Activated B cell treated with CpG ODN at 0.5 μM for 24 hours (primary cell): ENCODE measurements at regions of chr3 and their contacts with region 1.

Region 1: DNA sequence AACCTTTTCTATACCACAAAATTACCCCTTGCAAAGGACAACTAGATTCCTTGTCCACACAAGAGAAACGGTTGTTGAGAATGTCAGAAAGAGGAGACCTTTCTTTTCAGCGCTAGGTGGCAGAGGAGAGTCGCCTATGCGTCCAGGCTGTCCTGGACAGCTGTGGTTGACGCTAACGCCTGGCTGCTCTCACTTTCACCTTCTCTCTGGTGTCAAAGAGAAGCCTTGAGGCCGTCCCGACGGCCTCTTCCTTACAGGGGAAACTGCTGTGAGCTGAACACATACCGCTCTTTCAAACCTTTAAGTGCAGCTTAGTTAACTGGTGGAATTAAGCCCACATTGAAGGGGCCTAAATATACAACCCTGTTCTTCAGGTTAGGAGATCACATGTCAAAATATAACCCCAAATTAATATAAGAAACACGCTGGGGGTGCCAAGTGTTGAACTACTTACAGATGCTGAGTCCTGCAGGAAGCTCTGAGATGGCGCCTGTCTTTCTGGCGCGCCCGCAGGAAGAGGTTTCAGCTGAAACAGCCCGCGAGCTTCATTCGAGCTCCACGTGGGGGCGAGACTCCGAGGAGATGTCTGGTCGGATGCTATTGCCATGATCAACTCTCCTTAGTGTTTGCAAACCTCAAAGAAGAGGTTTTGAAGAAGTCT is 26.1 kb upstream of the KBTBD8 start:
- DNase-seq: peak; percentile 40
- ATAC-seq: peak; percentile 96
- H3K4me3 Mint-ChIP-seq: peak overlapping the region; percentile 84
- H3K27ac Mint-ChIP-seq: peak overlapping the region; percentile 88
- H3K4me1 Mint-ChIP-seq: peaks cover 15% of the 10 kb centered on the region
- H3K27me3 Mint-ChIP-seq: no peaks in the 10 kb centered on the region
- CTCF ChIP-seq: peak; percentile 42

Region 2: GRCh38 chr3:66544619-66545429 is 427.2 kb before region 1 on chr3:
- CTCF ChIA-PET with region 1: no interaction called
- POLR2A ChIA-PET with region 1: no interaction called
- intact Hi-C with region 1: no loop called
- DNase-seq: no peak
- ATAC-seq: no peak
- H3K4me3 Mint-ChIP-seq: no peak overlapping the region
- H3K27ac Mint-ChIP-seq: no peak overlapping the region
- H3K4me1 Mint-ChIP-seq: no peaks in the 10 kb centered on the region
- H3K27me3 Mint-ChIP-seq: peaks cover 3% of the 10 kb centered on the region
- CTCF ChIP-seq: no peak

Region 3: GRCh38 chr3:66885326-66886000 is 86.6 kb before region 1 on chr3:
- CTCF ChIA-PET with region 1: no interaction called
- POLR2A ChIA-PET with region 1: no interaction called
- intact Hi-C with region 1: no loop called
- DNase-seq: no peak
- ATAC-seq: no peak
- H3K4me3 Mint-ChIP-seq: no peak overlapping the region
- H3K27ac Mint-ChIP-seq: no peak overlapping the region
- H3K4me1 Mint-ChIP-seq: no peaks in the 10 kb centered on the region
- H3K27me3 Mint-ChIP-seq: no peaks in the 10 kb centered on the region
- CTCF ChIP-seq: no peak

Region 4: DNA sequence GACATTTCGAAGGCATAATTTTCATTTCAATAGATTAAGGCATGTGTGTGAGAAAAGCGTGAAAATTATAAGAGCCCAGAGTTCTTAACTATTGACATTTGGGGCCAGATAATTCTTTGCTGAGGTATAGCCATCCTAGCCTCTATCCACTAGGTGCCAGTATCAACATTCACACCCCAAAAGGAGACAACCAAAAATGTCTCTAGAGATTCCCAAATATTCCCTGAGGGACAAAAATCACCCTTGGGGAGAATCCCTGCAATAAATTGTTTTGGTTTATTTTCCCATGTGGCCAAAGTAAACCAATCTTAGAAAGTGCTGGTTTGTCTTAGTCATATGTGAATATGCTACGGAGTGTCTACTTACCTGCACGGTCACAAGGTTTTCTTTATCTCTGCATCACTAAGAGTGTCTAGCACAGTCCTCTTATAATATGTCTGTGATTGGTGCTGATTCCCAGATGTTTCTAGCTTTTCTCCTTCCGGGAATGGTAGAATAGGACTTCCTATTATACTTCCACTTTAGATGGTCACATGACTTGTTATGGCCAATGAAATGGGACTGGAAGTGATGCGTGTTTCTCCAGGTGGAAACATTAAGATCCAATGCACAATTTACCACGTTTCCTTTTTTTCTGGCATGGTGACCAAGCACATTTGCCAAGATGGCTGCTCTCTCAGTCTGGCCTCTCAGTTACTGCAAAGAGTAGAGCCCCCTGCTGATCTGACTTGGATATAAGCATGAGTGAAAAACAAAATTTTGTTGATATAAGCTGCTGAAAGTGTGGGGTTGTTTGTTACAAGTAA is 18.0 kb after region 1 on chr3:
- CTCF ChIA-PET with region 1: interaction called, 77 read pairs
- POLR2A ChIA-PET with region 1: interaction called, 4 read pairs
- intact Hi-C with region 1: loop called (anchors 1 kb)
- DNase-seq: no peak
- ATAC-seq: peak; percentile 83
- H3K4me3 Mint-ChIP-seq: peak overlapping the region; percentile 83
- H3K27ac Mint-ChIP-seq: peak overlapping the region; percentile 87
- H3K4me1 Mint-ChIP-seq: peaks cover 5% of the 10 kb centered on the region
- H3K27me3 Mint-ChIP-seq: peaks cover 3% of the 10 kb centered on the region
- CTCF ChIP-seq: no peak

Region 5: DNA sequence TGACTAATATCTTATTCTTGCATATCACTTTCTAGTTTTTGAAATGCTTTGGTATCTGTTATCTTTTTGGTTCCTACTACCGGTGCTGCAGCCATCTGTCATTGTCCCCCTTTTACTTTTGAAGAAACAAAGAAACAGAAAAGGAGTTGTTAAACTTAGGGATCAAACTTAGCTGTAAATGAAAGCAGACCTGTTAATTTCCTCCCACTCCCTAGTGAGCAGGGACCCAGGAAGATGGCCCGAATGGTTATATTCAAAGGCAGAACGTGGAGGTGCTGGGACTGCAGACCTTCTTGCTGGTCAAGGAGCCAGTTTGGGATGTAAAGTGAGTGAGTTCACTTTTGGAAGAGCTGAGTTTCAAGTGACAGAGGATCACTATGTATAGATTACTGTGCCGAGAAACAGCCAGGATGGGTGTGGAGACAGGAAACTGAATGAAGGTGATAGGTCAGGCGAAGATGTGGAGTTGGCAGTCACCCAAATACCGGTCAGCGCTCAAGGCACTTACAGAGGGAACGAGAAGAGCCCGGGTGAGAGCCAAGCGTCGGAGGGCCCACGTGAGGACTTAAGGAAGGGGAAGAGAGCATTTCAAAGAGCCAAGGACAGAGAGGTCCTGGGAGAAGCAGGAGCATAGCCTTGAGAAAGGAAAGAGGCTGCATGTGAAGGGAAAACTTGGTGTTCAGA is 46.2 kb after region 1 on chr3:
- CTCF ChIA-PET with region 1: interaction called, 10 read pairs
- POLR2A ChIA-PET with region 1: interaction called, 3 read pairs
- intact Hi-C with region 1: no loop called
- DNase-seq: no peak
- ATAC-seq: peak; percentile 38
- H3K4me3 Mint-ChIP-seq: peak overlapping the region; percentile 52
- H3K27ac Mint-ChIP-seq: peak overlapping the region; percentile 69
- H3K4me1 Mint-ChIP-seq: peaks cover 55% of the 10 kb centered on the region
- H3K27me3 Mint-ChIP-seq: no peaks in the 10 kb centered on the region
- CTCF ChIP-seq: no peak

Region 6: GRCh38 chr3:67048067-67048714 is 76.2 kb after region 1 on chr3:
- CTCF ChIA-PET with region 1: interaction called, 42 read pairs
- POLR2A ChIA-PET with region 1: interaction called, 5 read pairs
- intact Hi-C with region 1: loop called (anchors 1 kb)
- DNase-seq: no peak
- ATAC-seq: peak; percentile 89
- H3K4me3 Mint-ChIP-seq: peak overlapping the region; percentile 75
- H3K27ac Mint-ChIP-seq: peak overlapping the region; percentile 93
- H3K4me1 Mint-ChIP-seq: peaks cover 52% of the 10 kb centered on the region
- H3K27me3 Mint-ChIP-seq: no peaks in the 10 kb centered on the region
- CTCF ChIP-seq: no peak

Region 7: GRCh38 chr3:67384760-67385397 is 412.9 kb after region 1 on chr3:
- CTCF ChIA-PET with region 1: interaction called, 8 read pairs
- POLR2A ChIA-PET with region 1: no interaction called
- intact Hi-C with region 1: loop called (anchors 5 kb)
- DNase-seq: no peak
- ATAC-seq: no peak
- H3K4me3 Mint-ChIP-seq: no peak overlapping the region
- H3K27ac Mint-ChIP-seq: no peak overlapping the region
- H3K4me1 Mint-ChIP-seq: peaks cover 22% of the 10 kb centered on the region
- H3K27me3 Mint-ChIP-seq: no peaks in the 10 kb centered on the region
- CTCF ChIP-seq: no peak

Region 8: DNA sequence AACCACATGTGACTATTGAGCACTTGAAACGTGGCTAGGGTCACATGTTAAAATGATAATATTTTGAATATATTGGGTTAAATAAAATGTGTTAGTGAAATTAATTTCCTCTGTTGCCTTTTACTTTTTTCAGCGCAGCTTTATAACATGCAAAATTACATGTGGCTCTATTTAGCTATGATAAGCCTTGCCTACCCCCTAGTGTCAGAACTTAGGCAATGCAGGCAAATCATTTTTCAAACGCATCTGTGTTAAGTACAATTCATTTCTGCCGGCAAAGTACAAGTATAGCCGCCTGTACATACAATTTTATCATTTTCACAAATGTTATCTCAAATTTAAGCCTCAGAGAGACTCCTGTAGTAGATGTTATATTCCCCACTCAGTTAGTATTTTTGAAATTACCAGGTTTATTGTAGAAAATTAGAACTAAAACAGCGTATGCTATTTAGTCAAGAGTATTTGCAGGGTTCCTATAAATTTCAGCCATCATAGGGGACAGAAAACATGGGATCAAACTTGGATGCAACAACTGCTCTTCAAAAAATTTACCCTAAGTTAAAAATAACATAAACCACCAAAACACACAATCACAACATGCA is 1904.2 kb after region 1 on chr3:
- CTCF ChIA-PET with region 1: interaction called, 29 read pairs
- POLR2A ChIA-PET with region 1: no interaction called
- intact Hi-C with region 1: loop called (anchors 1 kb)
- DNase-seq: no peak
- ATAC-seq: peak; percentile 69
- H3K4me3 Mint-ChIP-seq: no peak overlapping the region
- H3K27ac Mint-ChIP-seq: no peak overlapping the region
- H3K4me1 Mint-ChIP-seq: no peaks in the 10 kb centered on the region
- H3K27me3 Mint-ChIP-seq: peaks cover 23% of the 10 kb centered on the region
- CTCF ChIP-seq: peak; percentile 32